Psoas muscle (tissue), 8 donors: ENCODE measurements at regions of chr15 and their contacts with region 1.

Region 1: GRCh38 chr15:56252386-56252785 is 8.7 kb upstream of the RFX7 start:
- DNase-seq: no peak
- ATAC-seq: no peak
- H3K4me3 ChIP-seq: no peak overlapping the region
- H3K27ac ChIP-seq: no peak overlapping the region
- H3K4me1 ChIP-seq: peaks cover 7% of the 10 kb centered on the region
- H3K27me3 ChIP-seq: no peaks in the 10 kb centered on the region
- CTCF ChIP-seq: no peak

Region 2: DNA sequence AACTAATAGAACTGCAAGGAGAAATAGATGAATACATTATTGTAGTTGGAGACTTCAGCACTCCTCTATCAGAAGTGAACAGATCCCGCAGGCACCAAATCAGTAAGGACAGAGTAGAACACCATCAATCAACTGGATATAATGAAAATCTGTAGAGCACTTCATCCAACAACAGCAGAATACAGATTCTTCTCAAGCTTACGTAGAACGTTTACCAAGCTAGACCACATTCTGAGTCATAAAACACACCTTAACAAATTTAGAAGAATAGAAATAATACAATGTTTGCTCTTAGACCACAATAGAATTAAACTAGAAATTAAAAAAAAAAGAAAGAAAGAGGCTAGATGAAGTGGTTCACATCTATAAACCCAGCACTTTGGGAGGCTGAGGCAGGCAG is 188.2 kb before region 1 on chr15:
- intact Hi-C with region 1: no loop called
- DNase-seq: no peak
- ATAC-seq: no peak
- H3K4me3 ChIP-seq: no peak overlapping the region
- H3K27ac ChIP-seq: no peak overlapping the region
- H3K4me1 ChIP-seq: no peaks in the 10 kb centered on the region
- H3K27me3 ChIP-seq: no peaks in the 10 kb centered on the region
- CTCF ChIP-seq: no peak

Region 3: GRCh38 chr15:56411122-56411749 is 158.8 kb after region 1 on chr15:
- intact Hi-C with region 1: loop called in 1 of 2 experiments (anchors 5 kb)
- DNase-seq: no peak
- ATAC-seq: no peak
- H3K4me3 ChIP-seq: no peak overlapping the region
- H3K27ac ChIP-seq: no peak overlapping the region
- H3K4me1 ChIP-seq: no peaks in the 10 kb centered on the region
- H3K27me3 ChIP-seq: no peaks in the 10 kb centered on the region
- CTCF ChIP-seq: no peak